PC-9 (cell line): ENCODE measurements at regions of chr3 and their contacts with region 1.

Region 1: DNA sequence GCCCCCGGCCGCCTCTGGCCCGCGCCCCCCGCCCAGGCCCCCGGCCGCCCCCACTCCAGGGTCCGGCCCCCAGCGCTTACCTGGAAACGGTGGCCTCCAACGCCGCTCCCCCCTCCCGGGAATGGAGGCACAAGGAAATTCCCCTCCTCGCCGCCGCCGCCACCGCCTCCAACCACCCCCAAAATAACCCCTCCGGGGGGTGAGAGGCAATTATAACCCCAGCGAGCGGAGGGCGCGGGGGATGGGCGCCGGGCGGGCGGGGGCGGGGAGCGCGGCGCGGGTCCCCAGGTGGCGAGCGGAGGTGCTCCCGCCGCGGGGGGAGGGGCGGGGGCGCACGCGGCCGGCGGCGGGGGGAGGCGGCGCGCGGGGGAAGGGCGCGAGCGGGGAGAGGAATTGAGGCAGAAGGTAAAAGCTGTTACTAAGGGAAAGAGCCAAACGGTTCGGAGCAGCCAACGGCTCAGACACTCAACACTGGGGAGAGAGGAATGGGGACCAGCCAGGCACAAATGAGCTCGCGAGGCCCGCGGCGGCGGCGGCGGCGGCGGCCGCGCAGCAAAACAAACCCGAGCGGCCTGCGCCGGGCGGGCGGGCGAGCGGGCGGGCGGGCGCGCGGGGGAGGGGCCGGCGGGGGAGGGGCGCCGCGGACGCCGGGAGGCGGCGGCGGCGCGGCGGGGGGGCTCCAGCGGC is at the start of gene TBL1XR1:
- DNase-seq: peak; percentile 92 to 96
- H3K4me3 ChIP-seq: peak within 1 kb of the TSS; percentile 82
- H3K27ac ChIP-seq: peak within 1 kb of the TSS; percentile 97
- H3K4me1 ChIP-seq: peaks cover 44% of the 10 kb centered on the region
- H3K27me3 ChIP-seq: no peaks in the 10 kb centered on the region
- CTCF ChIP-seq: no peak
- total RNA-seq, gene TBL1XR1: 232 and 243 TPM in 2 replicates

Region 2: DNA sequence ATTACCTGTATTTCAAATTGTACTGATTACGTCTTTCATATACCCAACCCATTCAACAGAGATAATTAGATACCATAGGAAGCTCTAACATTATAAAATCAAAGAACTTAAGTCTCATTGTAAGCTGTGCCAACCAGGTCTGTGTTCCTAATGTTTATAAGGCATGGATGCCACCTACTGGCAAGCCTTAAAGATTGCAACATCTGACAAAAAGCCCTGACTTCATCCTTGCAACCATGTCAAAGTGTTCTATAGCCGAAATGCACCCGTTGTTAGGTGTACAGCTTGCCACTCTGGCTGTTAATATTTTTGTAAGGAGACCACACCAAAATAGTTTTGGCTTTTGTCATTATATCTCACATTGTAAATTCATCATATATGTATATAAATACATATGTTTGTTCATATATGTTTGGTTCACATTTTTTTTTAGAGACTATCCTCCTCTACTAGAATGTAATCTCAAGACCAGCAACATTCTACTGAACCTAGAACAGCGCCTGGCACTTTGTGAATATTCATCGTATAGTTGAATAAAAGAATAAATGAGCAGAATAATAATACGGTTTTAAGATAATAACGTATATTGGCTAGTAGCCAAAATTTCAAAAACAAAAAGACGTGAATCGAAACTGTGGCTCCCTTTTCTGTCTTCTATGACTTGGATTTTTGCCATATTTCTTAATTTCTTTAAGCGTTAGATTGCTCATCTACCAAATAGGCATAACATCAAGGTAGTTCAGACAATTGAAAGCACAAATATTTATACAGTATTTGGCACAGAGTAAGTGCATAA is 258.0 kb before region 1 on chr3:
- CTCF ChIA-PET with region 1: no interaction called
- POLR2A ChIA-PET with region 1: no interaction called
- intact Hi-C with region 1: loop called (anchors 5 kb)
- DNase-seq: peak; percentile 47 to 76
- H3K4me3 ChIP-seq: no peak overlapping the region
- H3K27ac ChIP-seq: no peak overlapping the region
- H3K4me1 ChIP-seq: no peaks in the 10 kb centered on the region; the same call in 1 of the 2 replicates
- H3K27me3 ChIP-seq: no peaks in the 10 kb centered on the region
- CTCF ChIP-seq: peak; percentile 98

Region 3: DNA sequence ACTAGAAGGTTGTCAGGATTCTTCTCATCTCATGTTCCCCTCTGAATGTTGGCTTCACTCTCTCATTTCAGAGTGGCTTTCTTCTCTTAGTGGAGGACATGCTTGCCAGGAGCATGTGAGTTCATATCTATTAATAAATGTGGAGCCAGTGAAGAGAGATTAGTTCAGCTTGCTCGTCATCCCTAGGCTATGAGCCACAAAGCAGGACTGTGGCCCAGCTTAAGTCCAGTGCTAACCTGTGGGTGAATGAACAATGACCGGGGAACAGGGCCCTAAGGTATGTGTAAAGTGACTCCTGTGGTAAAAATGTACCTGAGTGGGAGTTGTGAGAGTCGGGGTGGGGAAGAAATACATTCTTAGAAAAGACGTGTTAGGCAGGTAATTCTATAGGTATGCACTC is 97.0 kb after region 1 on chr3:
- CTCF ChIA-PET with region 1: no interaction called
- POLR2A ChIA-PET with region 1: no interaction called
- intact Hi-C with region 1: loop called (anchors 1 kb)
- DNase-seq: peak; percentile 69 to 71
- H3K4me3 ChIP-seq: no peak overlapping the region
- H3K27ac ChIP-seq: peak overlapping the region; percentile 57; the same call in 1 of the 2 replicates
- H3K4me1 ChIP-seq: peaks cover 23% of the 10 kb centered on the region
- H3K27me3 ChIP-seq: no peaks in the 10 kb centered on the region
- CTCF ChIP-seq: no peak

Region 4: DNA sequence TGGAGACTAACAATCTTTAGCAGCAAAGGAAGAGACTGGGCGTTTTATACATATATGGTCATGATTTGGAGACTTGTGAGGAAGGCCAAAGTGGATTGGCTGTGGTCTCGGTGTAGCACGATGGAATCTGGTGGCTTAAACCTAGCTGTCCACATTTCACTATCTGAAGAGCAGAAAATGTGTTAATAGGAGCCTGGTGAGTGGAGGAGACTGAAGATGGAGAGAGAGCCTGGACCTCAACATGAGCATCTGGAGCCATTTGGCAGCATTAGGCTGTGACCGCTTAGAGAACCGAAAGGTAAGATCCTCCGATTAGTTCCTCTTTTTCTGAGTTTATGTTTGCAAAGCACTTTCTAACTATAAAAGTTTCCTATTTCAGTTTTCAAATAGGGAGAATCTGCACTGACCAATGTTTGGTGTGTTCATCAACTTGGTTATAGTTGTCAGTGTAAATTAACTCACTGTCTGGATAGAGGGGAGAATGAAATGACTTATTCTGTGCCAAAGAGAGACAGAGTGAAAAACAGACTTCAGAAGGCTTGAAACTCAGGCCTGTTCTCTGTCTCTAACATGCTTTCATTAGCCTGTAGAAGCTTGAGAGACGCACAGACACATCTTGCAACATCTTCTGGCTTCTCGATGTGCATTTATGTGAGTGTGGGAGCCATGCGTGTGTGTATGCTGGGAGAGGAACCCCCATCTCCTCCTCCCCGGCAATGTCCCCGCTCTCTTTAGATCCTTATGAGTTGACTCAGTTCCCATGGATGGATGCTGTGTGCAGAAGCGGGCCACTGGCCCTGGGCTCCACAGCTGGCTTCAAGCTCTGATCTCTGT is 244.8 kb after region 1 on chr3:
- CTCF ChIA-PET with region 1: no interaction called
- POLR2A ChIA-PET with region 1: interaction called, 3 read pairs
- intact Hi-C with region 1: loop called (anchors 1 kb)
- DNase-seq: no peak
- H3K4me3 ChIP-seq: no peak overlapping the region
- H3K27ac ChIP-seq: no peak overlapping the region
- H3K4me1 ChIP-seq: peaks cover 21% of the 10 kb centered on the region
- H3K27me3 ChIP-seq: no peaks in the 10 kb centered on the region
- CTCF ChIP-seq: no peak

Region 5: GRCh38 chr3:177603148-177603603 is 406.0 kb after region 1 on chr3:
- CTCF ChIA-PET with region 1: no interaction called
- POLR2A ChIA-PET with region 1: interaction called, 10 read pairs
- intact Hi-C with region 1: loop called (anchors 2 kb)
- DNase-seq: no peak
- H3K4me3 ChIP-seq: peak overlapping the region; percentile 9; the same call in 1 of the 2 replicates
- H3K27ac ChIP-seq: peak overlapping the region; percentile 89
- H3K4me1 ChIP-seq: peaks cover 61% of the 10 kb centered on the region
- H3K27me3 ChIP-seq: no peaks in the 10 kb centered on the region
- CTCF ChIP-seq: no peak

Region 6: DNA sequence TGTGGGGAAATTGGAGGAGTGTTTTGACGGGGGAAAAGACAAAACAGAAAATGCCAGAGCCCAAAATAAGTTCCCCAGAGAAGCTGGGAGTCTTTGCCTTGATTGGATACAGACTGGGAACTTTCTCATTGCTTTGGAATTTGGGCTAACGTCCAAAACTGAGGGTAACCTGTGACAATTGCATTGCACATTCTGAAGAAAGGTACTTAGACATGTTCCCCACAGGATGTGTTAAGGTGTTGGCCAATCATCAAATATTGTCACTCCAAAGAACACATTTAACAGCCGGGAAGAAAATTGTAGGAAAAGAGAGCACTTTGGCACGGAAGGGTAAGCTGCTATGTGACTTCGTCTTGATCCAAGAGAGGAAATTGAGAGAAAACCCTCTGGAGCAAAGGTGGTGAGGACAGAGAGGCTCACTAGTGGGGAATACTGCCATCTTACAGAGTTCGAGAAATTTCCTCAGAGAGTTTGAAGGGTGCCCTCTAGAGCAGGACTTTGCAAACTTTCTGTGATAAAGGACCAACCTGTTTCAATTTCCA is 619.6 kb after region 1 on chr3:
- CTCF ChIA-PET with region 1: no interaction called
- POLR2A ChIA-PET with region 1: no interaction called
- intact Hi-C with region 1: loop called (anchors 2 kb)
- DNase-seq: peak; percentile 75 to 97
- H3K4me3 ChIP-seq: 0 out of 2 replicates have a peak overlapping the region, but pooled peaks have one; percentile 1
- H3K27ac ChIP-seq: peak overlapping the region; percentile 76
- H3K4me1 ChIP-seq: peaks cover 40% of the 10 kb centered on the region
- H3K27me3 ChIP-seq: no peaks in the 10 kb centered on the region
- CTCF ChIP-seq: peak; percentile 46; the same call in 1 of the 2 replicates